Gastrocnemius medialis (tissue), 4 donors: ENCODE measurements at regions of chr2 and their contacts with region 1.

Region 1: GRCh38 chr2:182186132-182186735 is 200.6 kb downstream of the PPP1R1C start:
- DNase-seq: no peak
- ATAC-seq: no peak
- H3K4me3 ChIP-seq: no peak overlapping the region
- H3K27ac ChIP-seq: no peak overlapping the region
- H3K4me1 ChIP-seq: no peaks in the 10 kb centered on the region
- H3K27me3 ChIP-seq: no peaks in the 10 kb centered on the region
- CTCF ChIP-seq: peak; percentile 57 to 76 (median 61)
- POLR2A ChIP-seq: no peak

Region 2: GRCh38 chr2:182636695-182637094 is 450.5 kb after region 1 on chr2:
- in situ Hi-C with region 1: loop called in 1 of 4 experiments (anchors 10 kb)
- intact Hi-C with region 1: no loop called
- DNase-seq: no peak
- ATAC-seq: no peak
- H3K4me3 ChIP-seq: no peak overlapping the region
- H3K27ac ChIP-seq: no peak overlapping the region
- H3K4me1 ChIP-seq: no peaks in the 10 kb centered on the region
- H3K27me3 ChIP-seq: no peaks in the 10 kb centered on the region
- CTCF ChIP-seq: no peak
- POLR2A ChIP-seq: no peak

Region 3: GRCh38 chr2:182650704-182651103 is 464.5 kb after region 1 on chr2:
- in situ Hi-C with region 1: loop called (anchors 5 to 10 kb)
- intact Hi-C with region 1: loop called (anchors 1 kb)
- DNase-seq: no peak
- ATAC-seq: no peak
- H3K4me3 ChIP-seq: no peak overlapping the region
- H3K27ac ChIP-seq: no peak overlapping the region
- H3K4me1 ChIP-seq: peaks cover 0 to 1% of the 10 kb centered on the region in 2 donors
- H3K27me3 ChIP-seq: no peaks in the 10 kb centered on the region
- CTCF ChIP-seq: peak in 4 of 5 experiments; percentile 26 to 40 (median 32)
- POLR2A ChIP-seq: no peak

Region 4: DNA sequence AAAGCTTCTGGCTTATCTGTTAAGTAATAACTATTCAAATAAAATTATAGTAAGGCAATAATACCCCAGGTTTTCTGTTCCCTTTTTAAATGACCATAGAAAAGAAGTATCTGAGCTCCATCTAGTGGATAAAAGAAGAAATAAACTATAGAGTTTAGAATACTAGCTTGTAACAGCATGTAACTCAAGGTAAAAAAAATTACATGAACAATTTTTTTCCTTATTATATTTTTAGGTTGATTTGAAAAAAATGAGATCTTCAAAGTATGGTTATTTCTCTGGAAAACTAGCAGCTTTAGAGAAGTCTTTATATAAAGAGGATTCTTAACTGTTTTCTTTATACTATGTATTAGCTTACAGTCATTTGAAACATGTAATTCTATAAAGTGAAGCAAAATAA is 793.9 kb after region 1 on chr2:
- in situ Hi-C with region 1: loop called in 2 of 4 experiments (anchors 25 kb)
- intact Hi-C with region 1: no loop called
- DNase-seq: no peak
- ATAC-seq: peak in 1 of 2 donors; percentile 75
- H3K4me3 ChIP-seq: no peak overlapping the region
- H3K27ac ChIP-seq: peak overlapping the region in 1 of 4 donors; percentile 36
- H3K4me1 ChIP-seq: no peaks in the 10 kb centered on the region
- H3K27me3 ChIP-seq: no peaks in the 10 kb centered on the region
- CTCF ChIP-seq: peak; percentile 40 to 70 (median 67)
- POLR2A ChIP-seq: no peak